Activated B cell treated with CpG ODN at 0.5 μM for 24 hours (primary cell): ENCODE measurements at regions of chr1 and their contacts with region 1.

Region 1: GRCh38 chr1:41728403-41729202 is 190.1 kb downstream of the HIVEP3 start:
- DNase-seq: peak; percentile 72
- ATAC-seq: peak; percentile 80
- H3K4me3 Mint-ChIP-seq: peak overlapping the region; percentile 80
- H3K27ac Mint-ChIP-seq: peak overlapping the region; percentile 93
- H3K4me1 Mint-ChIP-seq: peaks cover 74% of the 10 kb centered on the region
- H3K27me3 Mint-ChIP-seq: no peaks in the 10 kb centered on the region
- CTCF ChIP-seq: no peak

Region 2: DNA sequence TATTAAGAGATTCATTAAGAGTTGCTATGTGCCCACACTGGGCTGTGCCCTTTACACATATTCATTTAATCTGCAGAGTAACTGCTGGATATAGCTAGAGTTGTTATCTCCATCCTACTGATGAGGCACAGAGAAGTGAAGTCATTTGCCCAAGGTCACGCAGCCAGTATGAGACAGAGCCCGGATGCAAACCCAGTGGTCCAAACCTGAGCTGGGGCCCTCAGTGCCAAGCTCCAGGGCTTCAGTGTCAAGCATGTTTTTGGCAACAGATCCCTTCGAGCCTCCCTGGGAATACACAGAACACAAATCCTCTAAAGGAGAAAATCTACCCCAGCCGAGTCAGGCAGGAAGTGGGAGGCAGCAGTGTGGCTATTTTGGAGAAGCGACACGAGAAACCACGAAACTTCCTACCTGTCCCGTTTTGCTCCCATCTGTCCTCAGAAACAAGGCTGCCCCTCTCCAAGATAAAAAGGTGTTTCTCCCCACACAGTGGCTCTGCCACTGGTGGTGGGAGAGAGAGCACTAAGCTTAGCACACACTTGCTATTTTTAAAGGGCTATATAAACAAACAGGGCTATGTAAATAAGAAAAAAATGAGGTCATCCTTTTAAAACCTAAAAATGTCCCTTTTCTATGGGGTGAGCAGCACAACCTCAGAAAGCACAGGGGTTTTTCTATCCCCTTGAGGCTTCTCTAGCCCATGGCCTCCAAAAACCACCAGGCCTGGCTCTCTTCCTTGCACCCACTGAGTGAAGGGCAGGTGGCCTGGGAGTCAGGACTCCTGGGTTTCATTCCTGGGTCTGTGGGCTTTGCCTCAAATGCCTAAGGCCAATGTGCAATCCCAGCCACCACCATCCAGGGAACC is 105.5 kb before region 1 on chr1:
- CTCF ChIA-PET with region 1: no interaction called
- POLR2A ChIA-PET with region 1: no interaction called
- intact Hi-C with region 1: loop called (anchors 1 kb)
- DNase-seq: no peak
- ATAC-seq: peak; percentile 92
- H3K4me3 Mint-ChIP-seq: peak overlapping the region; percentile 78
- H3K27ac Mint-ChIP-seq: peak overlapping the region; percentile 90
- H3K4me1 Mint-ChIP-seq: peaks cover 63% of the 10 kb centered on the region
- H3K27me3 Mint-ChIP-seq: no peaks in the 10 kb centered on the region
- CTCF ChIP-seq: no peak

Region 3: GRCh38 chr1:41687007-41687406 is 41.6 kb before region 1 on chr1:
- CTCF ChIA-PET with region 1: interaction called, 3 read pairs
- POLR2A ChIA-PET with region 1: interaction called, 6 read pairs
- intact Hi-C with region 1: loop called (anchors 2 kb)
- DNase-seq: no peak
- ATAC-seq: peak; percentile 64
- H3K4me3 Mint-ChIP-seq: no peak overlapping the region
- H3K27ac Mint-ChIP-seq: peak overlapping the region; percentile 26
- H3K4me1 Mint-ChIP-seq: peaks cover 40% of the 10 kb centered on the region
- H3K27me3 Mint-ChIP-seq: no peaks in the 10 kb centered on the region
- CTCF ChIP-seq: no peak

Region 4: GRCh38 chr1:41745022-41745421 is 16.4 kb after region 1 on chr1:
- CTCF ChIA-PET with region 1: interaction called, 20 read pairs
- POLR2A ChIA-PET with region 1: interaction called, 138 read pairs
- intact Hi-C with region 1: loop called (anchors 1 kb)
- DNase-seq: no peak
- ATAC-seq: peak; percentile 89
- H3K4me3 Mint-ChIP-seq: peak overlapping the region; percentile 42
- H3K27ac Mint-ChIP-seq: peak overlapping the region; percentile 47
- H3K4me1 Mint-ChIP-seq: peaks cover 83% of the 10 kb centered on the region
- H3K27me3 Mint-ChIP-seq: no peaks in the 10 kb centered on the region
- CTCF ChIP-seq: no peak

Region 5: GRCh38 chr1:41765152-41765551 is 36.5 kb after region 1 on chr1:
- CTCF ChIA-PET with region 1: no interaction called
- POLR2A ChIA-PET with region 1: interaction called, 3 read pairs
- intact Hi-C with region 1: loop called (anchors 5 kb)
- DNase-seq: no peak
- ATAC-seq: peak; percentile 38
- H3K4me3 Mint-ChIP-seq: peak overlapping the region; percentile 46
- H3K27ac Mint-ChIP-seq: peak overlapping the region; percentile 16
- H3K4me1 Mint-ChIP-seq: peaks cover 58% of the 10 kb centered on the region
- H3K27me3 Mint-ChIP-seq: no peaks in the 10 kb centered on the region
- CTCF ChIP-seq: no peak

Region 6: GRCh38 chr1:41868599-41868998 is 140.0 kb after region 1 on chr1:
- CTCF ChIA-PET with region 1: no interaction called
- POLR2A ChIA-PET with region 1: interaction called, 3 read pairs
- intact Hi-C with region 1: loop called (anchors 1 kb)
- DNase-seq: no peak
- ATAC-seq: peak; percentile 74
- H3K4me3 Mint-ChIP-seq: no peak overlapping the region
- H3K27ac Mint-ChIP-seq: peak overlapping the region; percentile 4
- H3K4me1 Mint-ChIP-seq: peaks cover 23% of the 10 kb centered on the region
- H3K27me3 Mint-ChIP-seq: no peaks in the 10 kb centered on the region
- CTCF ChIP-seq: no peak

Region 7: DNA sequence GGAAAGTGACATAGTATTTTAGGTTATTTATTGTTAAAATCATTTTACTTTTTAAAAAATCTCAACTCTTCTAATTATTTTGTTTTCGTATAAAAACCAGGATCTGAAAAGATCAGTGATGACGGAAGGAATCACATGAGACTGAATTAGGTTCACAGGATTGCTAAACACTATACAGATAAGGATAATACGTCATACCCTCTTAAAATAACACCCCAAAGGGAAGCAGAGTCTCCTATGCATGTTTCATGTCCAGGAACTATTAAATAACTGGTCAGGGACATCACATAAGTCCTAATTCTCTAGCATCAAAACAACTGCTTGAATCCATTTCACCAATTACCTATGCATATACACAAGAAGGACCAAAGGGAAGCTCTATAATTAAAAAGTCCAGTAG is 521.6 kb after region 1 on chr1:
- CTCF ChIA-PET with region 1: no interaction called
- POLR2A ChIA-PET with region 1: no interaction called
- intact Hi-C with region 1: no loop called
- DNase-seq: no peak
- ATAC-seq: no peak
- H3K4me3 Mint-ChIP-seq: no peak overlapping the region
- H3K27ac Mint-ChIP-seq: no peak overlapping the region
- H3K4me1 Mint-ChIP-seq: peaks cover 28% of the 10 kb centered on the region
- H3K27me3 Mint-ChIP-seq: no peaks in the 10 kb centered on the region
- CTCF ChIP-seq: no peak

Region 8: DNA sequence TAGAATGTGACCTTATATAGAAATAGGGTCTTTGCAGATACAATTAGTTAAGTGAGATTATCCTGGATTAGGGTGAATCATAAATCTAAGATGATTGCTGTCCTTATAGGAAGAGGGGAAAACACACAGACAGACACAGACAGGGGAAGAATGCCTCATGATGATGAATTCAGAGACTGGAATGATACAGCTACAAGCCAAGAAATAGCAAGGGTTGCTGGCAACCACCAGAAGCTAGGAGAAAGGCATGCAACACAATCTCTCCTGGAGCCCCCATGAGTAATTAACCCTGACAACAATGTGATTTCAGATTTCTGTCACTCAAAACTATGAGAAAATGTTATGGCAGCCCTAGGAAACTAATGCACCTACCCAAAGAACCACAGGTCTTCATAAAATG is 910.5 kb after region 1 on chr1:
- CTCF ChIA-PET with region 1: no interaction called
- POLR2A ChIA-PET with region 1: no interaction called
- intact Hi-C with region 1: no loop called
- DNase-seq: no peak
- ATAC-seq: no peak
- H3K4me3 Mint-ChIP-seq: no peak overlapping the region
- H3K27ac Mint-ChIP-seq: no peak overlapping the region
- H3K4me1 Mint-ChIP-seq: no peaks in the 10 kb centered on the region
- H3K27me3 Mint-ChIP-seq: no peaks in the 10 kb centered on the region
- CTCF ChIP-seq: no peak